ENCODE measurements at regions of chr21 and their contacts with region 1.

Region 1: GRCh38 chr21:33924079-33924765 is 8.6 kb upstream of the ATP5PO start:
- DNase-seq: peak; percentile 63 to 98 (median 86)
- ATAC-seq: peak; percentile 94 to 97 (median 96)
- H3K4me3 ChIP-seq: no peak overlapping the region
- H3K4me3 Mint-ChIP-seq: no peak overlapping the region
- H3K27ac ChIP-seq: peak overlapping the region; percentile 39
- H3K27ac Mint-ChIP-seq: peak overlapping the region; percentile 25 to 77
- H3K4me1 ChIP-seq: peaks cover 2 to 12% of the 10 kb centered on the region in 2 experiments
- H3K4me1 Mint-ChIP-seq: peaks cover 0 to 15% (median 11%) of the 10 kb centered on the region in 3 donors
- H3K27me3 ChIP-seq: no peaks in the 10 kb centered on the region
- H3K27me3 Mint-ChIP-seq: no peaks in the 10 kb centered on the region

Region 2: GRCh38 chr21:33947451-33948095 is 23.4 kb after region 1 on chr21:
- CTCF ChIA-PET with region 1: interaction called, 6 to 35 read pairs
- POLR2A ChIA-PET with region 1: interaction called, 3 to 8 read pairs
- DNase-seq: peak; percentile 67 to 94 (median 81)
- ATAC-seq: peak; percentile 65 to 70 (median 70)
- H3K4me3 ChIP-seq: peak overlapping the region; percentile 2 to 35
- H3K4me3 Mint-ChIP-seq: peak overlapping the region; percentile 74 to 80 (median 76)
- H3K27ac ChIP-seq: peak overlapping the region; percentile 99
- H3K27ac Mint-ChIP-seq: peak overlapping the region; percentile 99
- H3K4me1 ChIP-seq: peaks cover 45 to 74% of the 10 kb centered on the region in 2 experiments
- H3K4me1 Mint-ChIP-seq: peaks cover 73 to 88% (median 85%) of the 10 kb centered on the region in 3 donors
- H3K27me3 ChIP-seq: no peaks in the 10 kb centered on the region
- H3K27me3 Mint-ChIP-seq: no peaks in the 10 kb centered on the region

Region 3: GRCh38 chr21:34004974-34005373 is 80.8 kb after region 1 on chr21:
- CTCF ChIA-PET with region 1: no interaction called
- POLR2A ChIA-PET with region 1: no interaction called
- DNase-seq: no peak
- ATAC-seq: no peak
- H3K4me3 ChIP-seq: no peak overlapping the region
- H3K4me3 Mint-ChIP-seq: no peak overlapping the region
- H3K27ac ChIP-seq: no peak overlapping the region
- H3K27ac Mint-ChIP-seq: no peak overlapping the region
- H3K4me1 ChIP-seq: peaks cover 0 to 6% of the 10 kb centered on the region in 2 experiments
- H3K4me1 Mint-ChIP-seq: peaks cover 8 to 9% (median 9%) of the 10 kb centered on the region in 3 donors
- H3K27me3 ChIP-seq: no peaks in the 10 kb centered on the region
- H3K27me3 Mint-ChIP-seq: no peaks in the 10 kb centered on the region

Region 4: DNA sequence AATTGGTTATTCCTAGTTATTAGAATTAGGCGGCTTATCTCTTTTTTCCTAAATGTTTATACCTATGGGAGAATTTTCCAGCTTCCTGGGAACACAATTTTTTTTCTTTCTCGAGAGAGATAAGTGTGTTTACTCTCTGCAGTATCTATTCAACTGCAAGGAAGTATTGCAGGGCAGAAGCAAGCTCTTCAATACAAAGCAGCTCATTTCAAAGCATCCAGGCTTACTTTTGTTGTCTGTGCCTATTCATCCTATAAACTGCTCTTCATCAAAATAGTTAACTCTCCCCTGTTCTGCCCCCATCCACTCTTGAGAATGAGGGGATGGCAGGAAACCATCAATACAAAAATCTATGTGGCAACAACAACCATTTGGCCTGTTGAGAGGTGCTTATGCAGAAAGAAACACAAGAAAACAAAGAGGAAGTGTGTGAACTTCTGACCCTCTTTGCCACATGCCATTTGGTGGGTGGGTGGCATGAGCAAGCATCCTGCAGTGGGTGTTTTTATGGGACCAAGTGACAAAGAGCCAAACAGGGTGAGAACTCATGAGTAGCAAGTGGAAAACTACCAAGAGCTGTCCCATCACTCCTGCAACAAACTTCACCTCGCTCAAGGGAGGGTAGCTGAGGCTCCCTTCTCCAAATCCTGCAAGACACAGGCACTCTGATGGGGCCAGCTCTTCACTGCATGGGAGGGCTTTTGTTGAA is 98.6 kb after region 1 on chr21:
- CTCF ChIA-PET with region 1: interaction called in 1 of 2 experiments, 10 read pairs
- POLR2A ChIA-PET with region 1: no interaction called
- DNase-seq: peak in 19 of 35 experiments; percentile 8 to 42 (median 18)
- ATAC-seq: peak; percentile 52 to 76 (median 63)
- H3K4me3 ChIP-seq: no peak overlapping the region
- H3K4me3 Mint-ChIP-seq: no peak overlapping the region
- H3K27ac ChIP-seq: peak overlapping the region; percentile 52
- H3K27ac Mint-ChIP-seq: no peak overlapping the region
- H3K4me1 ChIP-seq: peaks cover 17 to 25% of the 10 kb centered on the region in 2 experiments
- H3K4me1 Mint-ChIP-seq: peaks cover 13 to 26% (median 18%) of the 10 kb centered on the region in 3 donors
- H3K27me3 ChIP-seq: no peaks in the 10 kb centered on the region
- H3K27me3 Mint-ChIP-seq: no peaks in the 10 kb centered on the region

Region 5: DNA sequence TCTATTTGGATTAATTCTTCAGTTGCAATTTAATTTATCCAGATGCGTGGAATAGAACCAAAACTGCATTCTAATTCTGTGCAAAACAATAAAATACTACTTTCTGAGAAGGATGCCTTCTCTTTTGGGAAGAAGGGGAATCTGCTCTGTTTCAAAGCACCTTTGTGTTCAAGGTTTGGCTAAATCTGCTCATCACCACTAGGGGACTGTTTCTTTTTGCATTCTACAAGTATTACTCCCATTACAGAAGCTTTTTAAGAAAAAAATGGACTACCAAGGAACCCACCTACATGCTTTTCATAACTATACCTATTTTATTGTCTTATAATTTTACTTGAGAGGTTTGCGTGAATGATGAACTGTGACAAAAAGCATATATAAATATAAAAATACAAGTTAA is 167.4 kb after region 1 on chr21:
- CTCF ChIA-PET with region 1: interaction called, 4 to 23 read pairs
- POLR2A ChIA-PET with region 1: no interaction called
- DNase-seq: no peak
- ATAC-seq: no peak
- H3K4me3 ChIP-seq: no peak overlapping the region
- H3K4me3 Mint-ChIP-seq: peak overlapping the region in 1 of 3 donors; percentile 28
- H3K27ac ChIP-seq: no peak overlapping the region
- H3K27ac Mint-ChIP-seq: peak overlapping the region; percentile 1 to 41
- H3K4me1 ChIP-seq: peaks cover 19 to 38% of the 10 kb centered on the region in 2 experiments
- H3K4me1 Mint-ChIP-seq: peaks cover 46 to 64% (median 50%) of the 10 kb centered on the region in 3 donors
- H3K27me3 ChIP-seq: no peaks in the 10 kb centered on the region
- H3K27me3 Mint-ChIP-seq: no peaks in the 10 kb centered on the region

Region 6: DNA sequence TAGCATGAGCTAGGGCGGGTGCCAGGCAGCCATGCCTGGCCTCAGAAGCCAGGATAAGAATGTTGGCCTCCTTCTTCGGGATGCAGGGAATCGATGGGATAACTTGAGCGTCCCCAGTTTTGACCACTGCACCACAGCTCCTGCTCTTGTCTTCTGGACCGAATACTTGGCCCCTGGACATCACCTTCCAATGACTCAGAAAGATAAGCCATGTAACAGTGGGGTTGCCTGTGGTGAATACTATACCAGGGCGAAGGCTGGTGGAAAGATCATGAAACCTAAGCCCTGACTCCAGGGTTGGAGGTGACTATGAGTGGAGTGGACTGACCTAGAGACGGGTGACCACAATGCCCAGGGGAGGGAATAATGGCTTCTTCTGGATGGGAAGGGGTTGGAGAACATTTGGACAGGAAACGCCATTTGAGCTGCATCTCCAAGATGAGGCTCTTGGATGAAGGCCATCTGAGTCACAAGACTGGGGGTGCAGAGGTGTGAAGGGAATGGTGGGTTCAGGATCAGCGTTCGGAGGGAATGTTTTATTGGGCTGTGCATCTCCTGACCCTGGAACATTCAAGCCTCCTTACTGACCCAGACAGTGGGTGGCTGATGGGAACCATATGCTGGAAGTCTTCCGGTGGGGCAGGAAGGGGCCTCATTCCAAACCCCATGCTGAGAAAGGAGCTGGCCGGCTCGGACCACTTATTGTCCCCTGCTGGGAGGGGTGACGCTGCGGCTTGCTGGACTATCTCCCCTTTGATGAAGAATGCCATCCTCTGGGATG is 421.1 kb after region 1 on chr21:
- CTCF ChIA-PET with region 1: interaction called, 17 to 118 read pairs
- POLR2A ChIA-PET with region 1: no interaction called
- DNase-seq: no peak
- ATAC-seq: no peak
- H3K4me3 ChIP-seq: no peak overlapping the region
- H3K4me3 Mint-ChIP-seq: no peak overlapping the region
- H3K27ac ChIP-seq: no peak overlapping the region
- H3K27ac Mint-ChIP-seq: no peak overlapping the region
- H3K4me1 ChIP-seq: no peaks in the 10 kb centered on the region
- H3K4me1 Mint-ChIP-seq: peaks cover 0 to 6% (median 4%) of the 10 kb centered on the region in 3 donors
- H3K27me3 ChIP-seq: peaks cover 0 to 8% of the 10 kb centered on the region in 2 experiments
- H3K27me3 Mint-ChIP-seq: peaks cover 0 to 4% of the 10 kb centered on the region in 2 donors

Region 7: DNA sequence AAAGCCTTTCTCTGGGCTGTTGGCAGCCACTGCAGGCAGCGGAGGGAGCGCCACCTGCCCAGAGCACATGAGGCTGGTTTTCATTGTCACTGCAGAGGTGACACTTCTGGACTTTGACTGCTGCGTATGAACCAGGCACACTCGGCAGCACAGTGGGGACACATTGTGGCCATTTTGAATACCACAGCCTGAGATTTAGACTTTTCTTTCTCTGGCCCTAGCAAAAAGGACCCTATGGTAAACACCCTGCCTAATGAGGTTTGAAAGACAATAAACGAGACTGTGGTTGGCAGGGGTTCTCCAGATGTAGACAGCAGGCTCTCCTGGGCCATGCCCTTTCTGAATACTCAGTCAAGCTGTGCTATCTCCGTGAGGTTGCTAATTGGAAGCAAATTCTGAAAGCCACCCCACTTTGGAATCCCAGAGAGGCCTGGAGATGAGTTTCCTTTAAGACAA is 427.6 kb after region 1 on chr21:
- CTCF ChIA-PET with region 1: interaction called, 17 to 118 read pairs
- POLR2A ChIA-PET with region 1: no interaction called
- DNase-seq: peak in 6 of 35 experiments; percentile 2 to 45 (median 8)
- ATAC-seq: peak in 3 of 4 experiments; percentile 20 to 61 (median 36)
- H3K4me3 ChIP-seq: no peak overlapping the region
- H3K4me3 Mint-ChIP-seq: no peak overlapping the region
- H3K27ac ChIP-seq: no peak overlapping the region
- H3K27ac Mint-ChIP-seq: no peak overlapping the region
- H3K4me1 ChIP-seq: no peaks in the 10 kb centered on the region
- H3K4me1 Mint-ChIP-seq: peaks cover 0 to 8% (median 4%) of the 10 kb centered on the region in 3 donors
- H3K27me3 ChIP-seq: peaks cover 0 to 14% of the 10 kb centered on the region in 2 experiments
- H3K27me3 Mint-ChIP-seq: peaks cover 17 to 26% of the 10 kb centered on the region in 2 donors

Measured in T-cell (primary cell).